CD14-positive monocyte (primary cell): ENCODE measurements at regions of chr14 and their contacts with region 1.

Region 1: DNA sequence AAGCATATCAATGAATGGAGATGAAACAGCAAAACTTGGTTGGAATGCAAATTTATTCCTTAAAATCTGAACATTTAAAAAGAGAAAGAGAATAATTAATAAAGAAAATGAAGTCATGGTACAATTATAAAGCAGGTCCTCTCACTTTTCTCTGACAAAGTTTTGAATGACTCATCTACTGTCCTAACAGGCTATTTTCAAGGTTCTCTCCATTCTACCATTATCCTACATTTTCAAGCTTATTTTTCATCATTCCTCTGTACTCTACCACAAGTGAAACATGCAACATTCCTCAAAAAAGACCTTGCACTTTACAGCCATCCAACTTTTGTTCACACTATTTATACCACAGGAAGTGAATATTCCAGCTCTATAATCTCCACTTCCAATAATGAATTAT is 36.9 kb upstream of the AP4S1 start:
- DNase-seq: no peak
- H3K4me3 ChIP-seq: no peak overlapping the region
- H3K4me3 Mint-ChIP-seq: no peak overlapping the region
- H3K27ac ChIP-seq: no peak overlapping the region
- H3K27ac Mint-ChIP-seq: peak overlapping the region in 2 of 7 donors; percentile 38 to 57
- H3K4me1 ChIP-seq: peaks cover 9 to 14% of the 10 kb centered on the region in 2 donors
- H3K4me1 Mint-ChIP-seq: peaks cover 18% of the 10 kb centered on the region
- H3K27me3 ChIP-seq: no peaks in the 10 kb centered on the region
- H3K27me3 Mint-ChIP-seq: no peaks in the 10 kb centered on the region
- CTCF ChIP-seq: no peak

Region 2: DNA sequence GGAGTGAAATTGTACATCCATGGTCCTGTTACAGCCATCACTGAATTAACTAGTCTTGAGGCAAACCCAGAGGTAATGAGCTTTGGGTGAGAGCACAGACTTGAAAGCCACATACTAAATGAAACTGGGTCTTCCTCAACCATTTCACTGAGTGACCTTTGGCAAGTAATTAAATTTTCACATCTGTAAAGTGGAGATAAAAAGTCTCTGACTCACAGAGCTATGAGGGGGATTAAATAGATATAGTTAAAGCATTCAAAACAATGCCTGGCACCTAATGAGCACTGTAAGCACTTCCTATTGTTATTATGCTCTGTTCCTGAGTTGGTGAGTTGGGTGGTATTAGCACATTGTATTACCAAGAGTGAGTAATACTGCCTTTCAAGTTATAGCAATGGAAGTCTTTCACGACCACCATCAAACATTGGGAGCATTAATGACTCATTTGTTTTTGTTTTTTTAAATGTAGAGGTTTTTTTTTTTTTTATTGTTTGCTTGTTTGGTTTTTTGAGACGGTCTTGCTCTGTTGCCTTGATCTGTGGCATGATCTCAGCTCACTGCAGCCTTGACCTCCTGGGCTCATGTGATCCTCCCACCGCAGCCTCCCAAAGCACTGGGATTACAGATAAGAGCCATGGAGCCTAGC is 50.1 kb after region 1 on chr14:
- intact Hi-C with region 1: loop called in 1 of 2 experiments (anchors 10 kb)
- DNase-seq: peak in 1 of 3 donors; percentile 12
- H3K4me3 ChIP-seq: no peak overlapping the region
- H3K4me3 Mint-ChIP-seq: no peak overlapping the region
- H3K27ac ChIP-seq: no peak overlapping the region
- H3K27ac Mint-ChIP-seq: peak overlapping the region in 1 of 7 donors; percentile 11
- H3K4me1 ChIP-seq: peaks cover 5 to 9% of the 10 kb centered on the region in 2 donors
- H3K4me1 Mint-ChIP-seq: peaks cover 17% of the 10 kb centered on the region
- H3K27me3 ChIP-seq: no peaks in the 10 kb centered on the region
- H3K27me3 Mint-ChIP-seq: no peaks in the 10 kb centered on the region
- CTCF ChIP-seq: no peak